HCT116 (cell line): ENCODE measurements at regions of chr13 and their contacts with region 1.

Region 1: DNA sequence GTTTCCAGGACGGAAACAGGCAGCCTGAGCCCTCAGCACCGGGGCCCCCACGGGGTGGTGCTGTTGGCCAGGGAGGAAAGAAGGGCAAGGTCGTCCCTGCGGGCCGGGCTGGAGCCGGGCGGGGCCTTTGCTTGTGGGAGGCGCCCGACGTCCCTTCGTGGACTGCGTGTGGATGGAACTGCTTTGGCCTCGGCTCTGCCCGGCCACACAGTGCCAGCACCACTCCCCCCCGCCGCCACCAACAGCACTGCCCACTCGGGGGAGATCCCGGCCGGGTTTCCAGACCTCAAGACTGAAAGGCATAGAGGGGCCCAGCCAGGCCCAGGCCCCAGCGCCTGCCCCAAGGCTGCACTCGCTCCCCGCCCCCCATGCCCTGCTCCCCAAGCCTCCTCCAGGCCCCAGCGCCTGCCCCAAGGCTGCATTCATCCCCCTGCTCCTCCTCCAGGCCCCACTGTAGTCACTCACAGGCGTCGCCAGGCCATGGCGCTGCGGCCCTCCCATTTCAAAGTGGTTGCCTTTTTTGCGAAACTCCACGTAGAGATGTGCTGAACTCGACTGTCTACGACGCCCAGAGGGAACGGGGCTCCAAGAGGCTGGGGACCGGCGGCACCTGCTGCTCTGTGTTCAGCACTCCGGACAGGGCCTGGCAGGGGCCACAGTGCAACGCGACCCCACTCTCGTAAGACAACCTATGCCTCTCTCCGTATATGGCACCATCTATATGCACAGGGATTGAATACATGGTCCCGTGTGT is 22.5 kb downstream of the C13orf46 start:
- DNase-seq: peak; percentile 57
- ATAC-seq: peak; percentile 97
- H3K4me3 ChIP-seq: no peak overlapping the region
- H3K27ac ChIP-seq: peak overlapping the region; percentile 5; the same call in 1 of the 2 replicates
- H3K4me1 ChIP-seq: peaks cover 0 to 10% of the 10 kb centered on the region in 2 experiments; a peak in 3 of 4 replicates
- H3K27me3 ChIP-seq: no peaks in the 10 kb centered on the region
- CTCF ChIP-seq: peak in 2 of 3 experiments; percentile 79 to 89; a peak in 4 of 6 replicates
- POLR2A ChIP-seq: no peak
- RAD21 ChIP-seq: no peak

Region 2: DNA sequence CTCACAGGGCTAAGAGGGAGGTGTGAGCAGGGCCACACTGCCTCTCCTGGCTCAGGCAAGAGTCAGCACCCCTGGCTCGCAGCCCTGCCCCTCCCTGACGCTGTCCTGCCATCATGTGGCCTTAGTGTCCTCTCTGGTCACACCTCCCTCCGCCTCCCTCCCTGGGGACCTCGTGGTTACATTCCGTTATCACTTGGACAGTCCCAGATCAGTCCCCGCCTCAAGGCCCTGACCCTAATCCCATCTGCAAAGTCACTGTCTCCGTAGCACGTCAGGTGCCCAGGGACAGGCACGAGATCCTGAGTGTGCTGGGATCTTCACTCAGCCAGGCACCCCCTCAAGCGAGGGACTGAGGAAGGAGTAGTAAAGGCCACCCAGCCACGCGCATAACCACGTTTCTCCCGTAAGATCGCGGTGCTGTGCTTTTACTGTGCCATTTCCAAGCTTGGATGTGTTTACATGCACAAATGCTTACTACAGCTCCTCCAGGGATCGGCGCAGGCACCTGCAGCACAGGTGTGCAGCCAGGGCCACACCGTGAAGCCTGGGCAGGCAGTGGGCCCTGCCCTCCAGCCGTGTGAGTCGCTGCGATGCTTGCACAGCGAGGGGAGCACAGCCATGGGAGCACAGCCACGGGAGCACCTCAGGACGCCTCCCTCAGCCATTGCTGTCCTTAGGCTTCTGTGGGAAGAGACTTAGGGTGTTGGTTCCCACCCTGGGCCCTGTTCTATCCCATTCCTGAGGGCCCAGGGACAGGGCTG is 203.1 kb before region 1 on chr13:
- CTCF ChIA-PET with region 1: no interaction called
- POLR2A ChIA-PET with region 1: no interaction called
- RAD21 ChIA-PET with region 1: no interaction called
- intact Hi-C with region 1: no loop called
- DNase-seq: no peak
- ATAC-seq: peak; percentile 47; the same call in 1 of the 2 replicates
- H3K4me3 ChIP-seq: no peak overlapping the region
- H3K27ac ChIP-seq: no peak overlapping the region
- H3K4me1 ChIP-seq: no peaks in the 10 kb centered on the region
- H3K27me3 ChIP-seq: no peaks in the 10 kb centered on the region
- CTCF ChIP-seq: no peak
- POLR2A ChIP-seq: no peak
- RAD21 ChIP-seq: no peak

Region 3: GRCh38 chr13:113897161-113897560 is 54.3 kb before region 1 on chr13:
- CTCF ChIA-PET with region 1: no interaction called
- POLR2A ChIA-PET with region 1: no interaction called
- RAD21 ChIA-PET with region 1: no interaction called
- intact Hi-C with region 1: no loop called
- DNase-seq: no peak
- ATAC-seq: peak; percentile 90
- H3K4me3 ChIP-seq: no peak overlapping the region
- H3K27ac ChIP-seq: no peak overlapping the region; the same call in 1 of the 2 replicates
- H3K4me1 ChIP-seq: peaks cover 0 to 20% of the 10 kb centered on the region in 2 experiments; a peak in 3 of 4 replicates
- H3K27me3 ChIP-seq: no peaks in the 10 kb centered on the region
- CTCF ChIP-seq: no peak
- POLR2A ChIP-seq: no peak
- RAD21 ChIP-seq: no peak

Region 4: DNA sequence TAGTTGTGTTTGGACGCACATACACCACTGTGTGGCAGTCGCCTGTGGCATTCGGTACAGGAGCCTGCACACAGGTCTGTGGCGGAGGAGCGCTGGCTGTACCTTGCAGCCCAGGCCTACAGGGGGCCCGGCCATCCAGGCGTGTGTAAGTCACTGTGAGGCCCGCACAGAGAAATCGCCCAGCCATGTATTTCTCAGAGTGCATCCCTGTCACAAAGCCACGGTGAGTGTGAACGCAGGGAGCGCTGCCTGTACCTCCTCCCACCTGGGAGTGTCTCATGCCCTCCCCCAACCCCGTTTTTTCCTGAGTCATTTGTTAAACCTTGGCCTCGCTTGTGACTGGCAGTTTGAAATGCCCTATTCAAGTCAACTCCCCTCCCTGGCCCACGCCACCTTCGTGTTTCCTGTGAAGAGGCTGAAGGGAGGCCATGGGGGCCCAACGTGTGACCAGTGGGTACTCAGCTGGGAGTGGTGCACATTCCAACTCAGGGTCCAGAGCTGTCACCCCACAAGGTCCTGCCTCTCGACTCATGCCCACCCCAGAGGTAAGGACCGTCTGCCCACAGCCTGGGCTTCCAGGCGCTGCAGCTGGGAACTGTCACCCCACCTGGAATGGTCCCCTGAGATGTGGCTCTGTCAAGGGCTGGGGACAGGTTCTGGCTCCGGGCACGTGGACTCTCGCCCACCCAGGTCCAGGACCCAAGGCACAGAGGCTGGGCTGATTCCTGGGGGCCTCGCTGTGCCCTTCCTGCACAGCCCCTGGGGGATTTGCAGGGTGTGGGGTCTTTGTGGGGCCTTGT is 192.6 kb after region 1 on chr13:
- CTCF ChIA-PET with region 1: no interaction called
- POLR2A ChIA-PET with region 1: no interaction called
- RAD21 ChIA-PET with region 1: no interaction called
- intact Hi-C with region 1: loop called (anchors 10 kb)
- DNase-seq: peak; percentile 63
- ATAC-seq: peak; percentile 100
- H3K4me3 ChIP-seq: no peak overlapping the region
- H3K27ac ChIP-seq: no peak overlapping the region; the same call in 1 of the 2 replicates
- H3K4me1 ChIP-seq: peaks cover 4 to 10% of the 10 kb centered on the region in 2 experiments; a peak in 3 of 4 replicates
- H3K27me3 ChIP-seq: no peaks in the 10 kb centered on the region
- CTCF ChIP-seq: peak in 2 of 3 experiments; percentile 64 to 75; a peak in 4 of 6 replicates
- POLR2A ChIP-seq: no peak
- RAD21 ChIP-seq: no peak